OCI-LY7 (cell line): ENCODE measurements at regions of chr10 and their contacts with region 1.

Region 1: GRCh38 chr10:84537447-84537931 is 209.1 kb downstream of the CCSER2 start:
- DNase-seq: peak; percentile 70
- H3K4me3 ChIP-seq: no peak overlapping the region
- H3K27ac ChIP-seq: no peak overlapping the region
- H3K4me1 ChIP-seq: no peaks in the 10 kb centered on the region
- CTCF ChIP-seq: peak; percentile 93

Region 2: DNA sequence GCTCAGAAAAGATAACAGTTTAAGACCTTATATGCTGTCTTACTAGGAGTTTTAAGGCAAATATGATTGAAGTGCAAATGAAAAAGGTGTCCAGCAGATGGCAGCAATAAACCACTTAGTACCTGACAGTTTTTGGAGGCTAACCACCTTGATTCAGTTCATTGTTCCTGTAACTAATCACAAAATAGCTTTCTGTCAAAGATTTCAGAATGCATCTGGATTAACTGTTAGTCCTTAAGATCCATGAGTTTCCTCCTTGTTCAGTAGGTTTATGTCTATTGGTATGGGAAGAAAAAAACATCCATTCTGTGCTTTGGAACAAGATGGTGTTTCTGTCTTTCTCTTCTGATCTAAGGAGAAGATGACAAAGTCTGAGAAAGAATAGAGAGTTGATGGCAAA is 162.5 kb before region 1 on chr10:
- CTCF ChIA-PET with region 1: interaction called, 3 read pairs
- POLR2A ChIA-PET with region 1: no interaction called
- intact Hi-C with region 1: loop called (anchors 1 kb)
- DNase-seq: peak; percentile 57
- H3K4me3 ChIP-seq: no peak overlapping the region
- H3K27ac ChIP-seq: no peak overlapping the region
- H3K4me1 ChIP-seq: no peaks in the 10 kb centered on the region
- CTCF ChIP-seq: peak; percentile 93

Region 3: DNA sequence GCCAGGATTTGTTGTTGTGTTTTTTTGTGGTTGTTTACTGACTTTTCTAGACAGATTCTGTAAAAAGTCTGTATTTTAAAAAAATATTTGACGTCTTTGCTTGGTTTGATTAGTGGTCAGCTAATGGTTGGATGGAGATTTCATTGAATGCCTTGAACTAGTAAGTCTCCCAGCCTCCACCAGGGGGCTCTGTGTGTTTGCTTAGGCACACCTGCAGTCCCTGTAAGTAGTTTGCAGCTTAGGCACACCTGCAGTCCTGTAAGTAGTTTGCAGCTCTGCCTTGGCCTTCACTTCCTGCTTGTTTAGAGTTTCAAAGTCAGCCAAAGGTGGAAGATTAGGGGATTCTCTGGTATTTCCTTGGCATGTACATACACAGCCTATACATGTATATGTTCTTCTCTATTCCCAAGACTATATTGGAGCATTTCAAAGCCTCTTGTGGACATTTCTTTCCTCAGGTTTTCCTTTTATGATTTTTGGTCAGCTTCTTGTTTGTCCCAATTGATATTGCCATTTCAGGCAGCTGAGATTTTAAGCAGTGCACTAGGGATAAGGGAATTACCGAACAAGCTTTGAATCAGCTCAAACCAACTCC is 107.5 kb before region 1 on chr10:
- CTCF ChIA-PET with region 1: interaction called, 4 read pairs
- POLR2A ChIA-PET with region 1: no interaction called
- intact Hi-C with region 1: loop called (anchors 2 kb)
- DNase-seq: peak; percentile 86
- H3K4me3 ChIP-seq: no peak overlapping the region
- H3K27ac ChIP-seq: no peak overlapping the region
- H3K4me1 ChIP-seq: peaks cover 4% of the 10 kb centered on the region
- CTCF ChIP-seq: peak; percentile 94

Region 4: GRCh38 chr10:84715911-84716310 is 178.4 kb after region 1 on chr10:
- CTCF ChIA-PET with region 1: no interaction called
- POLR2A ChIA-PET with region 1: no interaction called
- intact Hi-C with region 1: loop called (anchors 1 kb)
- DNase-seq: peak; percentile 59
- H3K4me3 ChIP-seq: no peak overlapping the region
- H3K27ac ChIP-seq: no peak overlapping the region
- H3K4me1 ChIP-seq: no peaks in the 10 kb centered on the region
- CTCF ChIP-seq: peak; percentile 85